ENCODE measurements at regions of chr17 and their contacts with region 1.

Region 1: GRCh38 chr17:34261568-34262337 is 6.7 kb downstream of the CCL2 start:
- DNase-seq: peak; percentile 4
- H3K4me3 Mint-ChIP-seq: no peak overlapping the region
- H3K27ac Mint-ChIP-seq: no peak overlapping the region
- H3K4me1 Mint-ChIP-seq: peaks cover 16% of the 10 kb centered on the region
- H3K27me3 Mint-ChIP-seq: peaks cover 31% of the 10 kb centered on the region

Region 2: GRCh38 chr17:32783602-32784001 is 1478.2 kb before region 1 on chr17:
- intact Hi-C with region 1: no loop called
- DNase-seq: no peak
- H3K4me3 Mint-ChIP-seq: no peak overlapping the region
- H3K27ac Mint-ChIP-seq: no peak overlapping the region
- H3K4me1 Mint-ChIP-seq: no peaks in the 10 kb centered on the region
- H3K27me3 Mint-ChIP-seq: peaks cover 19% of the 10 kb centered on the region

Region 3: DNA sequence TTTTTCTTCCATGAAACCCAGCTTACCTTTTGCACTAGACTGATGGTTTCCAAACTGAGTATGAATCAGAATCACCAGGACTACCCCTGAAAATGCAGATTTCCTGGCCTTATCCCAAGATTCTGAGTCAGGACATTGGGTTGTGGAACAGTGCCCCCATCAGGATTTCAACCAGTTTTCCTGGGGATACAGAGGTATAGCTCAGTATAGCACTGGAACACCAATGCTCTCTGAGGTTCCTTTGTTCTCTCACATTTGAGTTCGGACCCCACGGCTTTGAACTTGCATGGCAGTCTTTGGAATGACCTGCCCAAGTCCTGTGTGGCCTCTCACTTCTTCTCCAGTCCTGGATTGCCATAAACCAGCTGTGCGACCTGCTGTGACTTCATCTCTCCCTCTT is 44.7 kb after region 1 on chr17:
- intact Hi-C with region 1: loop called (anchors 5 kb)
- DNase-seq: no peak
- H3K4me3 Mint-ChIP-seq: no peak overlapping the region
- H3K27ac Mint-ChIP-seq: no peak overlapping the region
- H3K4me1 Mint-ChIP-seq: peaks cover 57% of the 10 kb centered on the region
- H3K27me3 Mint-ChIP-seq: peaks cover 7% of the 10 kb centered on the region

Region 4: GRCh38 chr17:34337701-34338100 is 75.9 kb after region 1 on chr17:
- intact Hi-C with region 1: no loop called
- DNase-seq: no peak
- H3K4me3 Mint-ChIP-seq: no peak overlapping the region
- H3K27ac Mint-ChIP-seq: no peak overlapping the region
- H3K4me1 Mint-ChIP-seq: no peaks in the 10 kb centered on the region
- H3K27me3 Mint-ChIP-seq: peaks cover 25% of the 10 kb centered on the region

Region 5: GRCh38 chr17:34423978-34424813 is 162.4 kb after region 1 on chr17:
- intact Hi-C with region 1: no loop called
- DNase-seq: no peak
- H3K4me3 Mint-ChIP-seq: no peak overlapping the region
- H3K27ac Mint-ChIP-seq: no peak overlapping the region
- H3K4me1 Mint-ChIP-seq: no peaks in the 10 kb centered on the region
- H3K27me3 Mint-ChIP-seq: peaks cover 51% of the 10 kb centered on the region